Ovary (tissue), 10 donors: ENCODE measurements at regions of chr11 and their contacts with region 1.

Region 1: GRCh38 chr11:30666817-30667216 is 80.7 kb upstream of the MPPED2 start:
- DNase-seq: no peak
- H3K4me3 ChIP-seq: no peak overlapping the region
- H3K27ac ChIP-seq: no peak overlapping the region
- H3K4me1 ChIP-seq: no peaks in the 10 kb centered on the region
- H3K27me3 ChIP-seq: no peaks in the 10 kb centered on the region
- CTCF ChIP-seq: no peak
- EP300 ChIP-seq: no peak
- POLR2A ChIP-seq: no peak

Region 2: DNA sequence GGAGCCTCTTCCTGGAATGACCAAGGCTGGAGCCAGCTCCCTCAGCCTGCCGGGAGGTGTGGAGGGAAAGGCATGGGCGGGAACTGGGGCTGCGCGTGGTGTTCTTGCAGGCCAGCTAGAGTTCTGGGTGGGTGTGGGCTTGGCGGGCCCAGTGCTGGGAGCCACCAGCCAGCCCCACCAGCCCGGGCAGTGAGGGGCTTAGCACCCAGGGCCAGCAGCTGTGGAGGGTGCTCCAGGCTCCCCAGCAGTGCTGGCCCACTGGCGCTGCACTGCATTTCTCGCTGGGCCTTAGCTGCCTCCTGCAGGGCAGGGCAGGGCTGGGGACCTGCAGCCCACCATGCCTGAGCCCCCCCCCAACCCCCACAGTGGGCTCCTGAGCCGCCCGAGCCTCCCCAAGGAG is 954.2 kb before region 1 on chr11:
- intact Hi-C with region 1: no loop called
- DNase-seq: no peak
- H3K4me3 ChIP-seq: no peak overlapping the region
- H3K27ac ChIP-seq: no peak overlapping the region
- H3K4me1 ChIP-seq: no peaks in the 10 kb centered on the region
- H3K27me3 ChIP-seq: no peaks in the 10 kb centered on the region
- CTCF ChIP-seq: no peak
- EP300 ChIP-seq: no peak
- POLR2A ChIP-seq: no peak

Region 3: GRCh38 chr11:32583459-32584271 is 1916.8 kb after region 1 on chr11 and contains the start of gene EIF3M:
- intact Hi-C with region 1: loop called in 1 of 4 experiments (anchors 5 kb)
- DNase-seq: peak; percentile 96 to 98 (median 96)
- H3K4me3 ChIP-seq: peak within 1 kb of the TSS; percentile 73
- H3K27ac ChIP-seq: peak within 1 kb of the TSS in 1 of 2 donors; percentile 79
- H3K4me1 ChIP-seq: no peaks in the 10 kb centered on the region
- H3K27me3 ChIP-seq: no peaks in the 10 kb centered on the region
- CTCF ChIP-seq: no peak
- EP300 ChIP-seq: no peak
- POLR2A ChIP-seq: peak; percentile 77
- total RNA-seq, gene EIF3M: 273 to 571 (median 337) TPM